Activated T-helper 1 cell treated with anti-CD3 and anti-CD28 coated beads, Interleukin-12 subunit alpha, Interleukin-12 subunit beta, Interleukin-2, Interleukin-4 antibody, amounts not matched to agents 30 ng/mL and 10 ng/mL and 1 ng/mL, durations not matched to agents 14 hours and 24 hours and 36 hours (primary cell): ENCODE measurements at regions of chr7 and their contacts with region 1.

Region 1: DNA sequence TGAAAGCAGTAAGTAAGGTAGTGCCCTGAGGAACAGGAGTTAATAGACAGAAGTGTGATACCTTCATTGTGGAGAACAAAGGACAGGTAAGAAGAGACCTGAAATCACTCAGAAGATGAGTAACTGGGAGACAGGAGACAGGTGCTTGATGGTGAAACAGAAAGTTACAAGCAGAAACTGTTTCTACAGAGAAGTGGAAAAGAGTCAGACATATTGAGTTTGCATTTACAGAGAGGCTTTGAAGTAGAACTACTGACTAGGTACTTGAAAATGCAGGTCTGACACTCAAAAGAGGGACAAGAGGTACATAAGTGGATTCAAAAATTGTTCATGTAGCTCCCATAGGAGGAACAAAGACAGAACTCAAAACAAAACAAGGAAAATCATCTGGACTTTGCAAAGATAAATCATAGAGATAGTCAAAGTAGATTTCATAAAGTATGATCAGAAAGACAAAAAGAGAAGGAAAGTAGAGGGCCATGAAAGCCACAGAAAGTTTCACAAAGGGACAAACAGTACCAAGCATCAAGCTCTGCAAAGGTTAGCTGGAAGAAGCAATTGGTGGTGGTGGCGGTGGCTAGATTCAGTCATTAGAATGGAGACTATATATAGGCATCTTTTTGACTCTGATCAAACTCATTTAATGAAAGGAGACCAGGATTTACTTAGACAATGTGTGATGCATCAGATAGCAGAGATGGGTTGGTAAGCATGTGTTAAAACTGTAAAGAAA is 198.4 kb downstream of the PCLO start:
- DNase-seq: no peak
- H3K4me3 Mint-ChIP-seq: no peak overlapping the region
- H3K27ac Mint-ChIP-seq: no peak overlapping the region
- H3K4me1 Mint-ChIP-seq: no peaks in the 10 kb centered on the region
- H3K27me3 Mint-ChIP-seq: no peaks in the 10 kb centered on the region

Region 2: GRCh38 chr7:82722946-82723345 is 241.4 kb before region 1 on chr7:
- intact Hi-C with region 1: no loop called
- DNase-seq: no peak
- H3K4me3 Mint-ChIP-seq: no peak overlapping the region
- H3K27ac Mint-ChIP-seq: no peak overlapping the region
- H3K4me1 Mint-ChIP-seq: no peaks in the 10 kb centered on the region
- H3K27me3 Mint-ChIP-seq: no peaks in the 10 kb centered on the region

Region 3: GRCh38 chr7:82932516-82932915 is 31.8 kb before region 1 on chr7:
- intact Hi-C with region 1: loop called (anchors 2 kb)
- DNase-seq: no peak
- H3K4me3 Mint-ChIP-seq: no peak overlapping the region
- H3K27ac Mint-ChIP-seq: no peak overlapping the region
- H3K4me1 Mint-ChIP-seq: no peaks in the 10 kb centered on the region
- H3K27me3 Mint-ChIP-seq: no peaks in the 10 kb centered on the region

Region 4: DNA sequence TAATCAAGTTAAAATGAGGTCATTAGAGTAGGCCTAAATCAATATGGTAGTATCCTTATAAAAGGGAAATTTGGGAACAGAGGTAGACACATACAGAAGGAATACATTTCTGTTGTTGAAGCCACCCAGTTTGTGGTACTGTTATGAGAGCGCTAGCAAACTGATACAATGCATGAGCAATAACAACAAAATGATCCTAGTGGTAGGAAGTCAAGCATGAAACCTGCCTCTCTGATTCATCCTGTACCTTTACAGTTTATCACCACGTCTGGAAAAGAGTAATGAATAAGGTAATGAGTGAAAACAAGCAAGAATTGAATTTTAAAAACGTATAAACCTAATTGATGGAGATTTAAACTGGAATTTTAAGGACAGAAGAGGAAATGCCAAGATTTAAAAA is 18.8 kb before region 1 on chr7:
- intact Hi-C with region 1: no loop called
- DNase-seq: no peak
- H3K4me3 Mint-ChIP-seq: no peak overlapping the region
- H3K27ac Mint-ChIP-seq: no peak overlapping the region
- H3K4me1 Mint-ChIP-seq: no peaks in the 10 kb centered on the region
- H3K27me3 Mint-ChIP-seq: no peaks in the 10 kb centered on the region

Region 5: GRCh38 chr7:83248000-83248399 is 283.7 kb after region 1 on chr7:
- intact Hi-C with region 1: no loop called
- DNase-seq: no peak
- H3K4me3 Mint-ChIP-seq: no peak overlapping the region
- H3K27ac Mint-ChIP-seq: no peak overlapping the region
- H3K4me1 Mint-ChIP-seq: no peaks in the 10 kb centered on the region
- H3K27me3 Mint-ChIP-seq: no peaks in the 10 kb centered on the region

Region 6: GRCh38 chr7:83655951-83656556 is 691.7 kb after region 1 on chr7:
- intact Hi-C with region 1: no loop called
- DNase-seq: no peak
- H3K4me3 Mint-ChIP-seq: no peak overlapping the region
- H3K27ac Mint-ChIP-seq: no peak overlapping the region
- H3K4me1 Mint-ChIP-seq: no peaks in the 10 kb centered on the region
- H3K27me3 Mint-ChIP-seq: peaks cover 2% of the 10 kb centered on the region